ENCODE measurements at regions of chr12 and their contacts with region 1.

Region 1: DNA sequence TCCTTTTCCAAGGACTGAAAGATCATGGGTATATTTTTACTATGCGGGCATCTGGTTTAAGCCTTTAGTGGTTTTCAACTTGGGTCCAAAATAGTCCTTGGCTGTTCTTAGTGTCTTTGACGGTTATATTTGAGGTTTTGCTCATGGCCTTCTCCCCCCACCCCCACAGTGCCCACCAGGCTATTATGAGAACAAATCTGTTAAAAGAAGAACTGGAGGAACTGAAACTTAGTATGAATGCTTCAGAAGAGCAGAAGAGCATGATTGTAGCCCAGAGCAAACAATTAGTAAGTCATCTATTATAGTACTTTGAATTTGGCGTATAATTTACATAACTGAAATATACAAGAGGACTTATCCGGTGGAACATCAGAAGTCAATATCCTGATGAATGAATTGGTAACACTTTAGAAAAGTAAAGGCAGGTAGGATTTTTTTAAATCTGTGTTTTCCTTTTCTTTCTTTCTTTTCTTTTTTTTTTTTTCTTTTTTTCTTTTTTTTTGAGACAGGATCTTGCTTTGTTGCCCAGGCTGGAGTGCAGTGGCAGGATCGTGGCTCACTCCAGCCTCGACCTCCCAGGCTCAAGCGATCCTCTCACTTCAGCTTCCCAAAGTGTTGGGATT is 71.8 kb upstream of the BCAT1 start:
- DNase-seq: no peak
- ATAC-seq: peak; percentile 89
- H3K4me3 Mint-ChIP-seq: peak overlapping the region; percentile 60
- H3K27ac Mint-ChIP-seq: peak overlapping the region; percentile 81
- H3K4me1 Mint-ChIP-seq: peaks cover 68% of the 10 kb centered on the region
- H3K27me3 Mint-ChIP-seq: no peaks in the 10 kb centered on the region
- CTCF ChIP-seq: no peak

Region 2: GRCh38 chr12:24997970-24998582 is 22.7 kb before region 1 on chr12:
- CTCF ChIA-PET with region 1: interaction called, 11 read pairs
- POLR2A ChIA-PET with region 1: interaction called, 70 read pairs
- intact Hi-C with region 1: loop called (anchors 1 kb)
- DNase-seq: no peak
- ATAC-seq: peak; percentile 74
- H3K4me3 Mint-ChIP-seq: peak overlapping the region; percentile 69
- H3K27ac Mint-ChIP-seq: peak overlapping the region; percentile 97
- H3K4me1 Mint-ChIP-seq: peaks cover 90% of the 10 kb centered on the region
- H3K27me3 Mint-ChIP-seq: no peaks in the 10 kb centered on the region
- CTCF ChIP-seq: no peak

Region 3: DNA sequence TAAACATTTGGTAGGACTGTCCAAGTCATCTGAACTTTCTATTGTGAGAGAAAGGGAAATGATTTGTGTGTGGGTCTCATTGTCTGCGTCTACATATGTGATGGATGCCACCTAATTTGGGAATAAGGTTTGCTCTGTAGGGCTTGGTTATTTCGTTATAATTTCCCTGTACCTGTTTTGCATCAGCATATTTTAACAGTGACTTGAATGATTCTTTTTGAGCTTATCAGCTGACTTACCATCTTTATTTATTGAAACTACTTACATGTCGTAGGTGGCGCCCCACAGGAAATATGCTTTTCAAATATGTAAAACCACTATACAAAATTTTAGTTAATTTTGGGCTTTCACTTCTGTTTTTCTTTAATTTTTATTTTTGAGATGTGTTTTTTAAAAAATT is 15.4 kb before region 1 on chr12:
- CTCF ChIA-PET with region 1: interaction called, 3 read pairs
- POLR2A ChIA-PET with region 1: interaction called, 25 read pairs
- intact Hi-C with region 1: loop called (anchors 1 kb)
- DNase-seq: no peak
- ATAC-seq: peak; percentile 65
- H3K4me3 Mint-ChIP-seq: peak overlapping the region; percentile 66
- H3K27ac Mint-ChIP-seq: peak overlapping the region; percentile 86
- H3K4me1 Mint-ChIP-seq: peaks cover 74% of the 10 kb centered on the region
- H3K27me3 Mint-ChIP-seq: no peaks in the 10 kb centered on the region
- CTCF ChIP-seq: no peak

Region 4: DNA sequence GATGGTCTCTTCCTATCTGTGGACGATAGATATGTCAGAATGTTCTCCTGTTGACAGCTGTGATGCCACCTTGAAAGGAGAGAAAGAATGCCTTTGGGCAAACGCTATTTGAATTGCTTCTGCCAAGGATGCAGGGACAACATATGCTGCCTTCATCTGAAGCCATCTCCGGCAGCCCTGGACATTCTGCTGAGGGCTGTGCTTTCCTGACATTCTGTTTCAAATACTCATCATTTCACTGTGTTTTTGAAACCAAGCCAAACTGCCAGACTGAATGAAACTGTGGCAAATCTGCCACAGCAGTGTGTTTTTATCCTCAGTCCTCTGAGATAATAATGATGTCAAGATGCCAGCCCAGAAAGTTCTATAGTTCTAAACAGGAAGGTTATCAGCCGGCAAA is 13.9 kb after region 1 on chr12:
- CTCF ChIA-PET with region 1: no interaction called
- POLR2A ChIA-PET with region 1: interaction called, 3 read pairs
- intact Hi-C with region 1: loop called (anchors 1 kb)
- DNase-seq: no peak
- ATAC-seq: no peak
- H3K4me3 Mint-ChIP-seq: no peak overlapping the region
- H3K27ac Mint-ChIP-seq: no peak overlapping the region
- H3K4me1 Mint-ChIP-seq: peaks cover 9% of the 10 kb centered on the region
- H3K27me3 Mint-ChIP-seq: no peaks in the 10 kb centered on the region
- CTCF ChIP-seq: no peak

Region 5: GRCh38 chr12:25074954-25075353 is 54.2 kb after region 1 on chr12:
- CTCF ChIA-PET with region 1: no interaction called
- POLR2A ChIA-PET with region 1: no interaction called
- intact Hi-C with region 1: loop called (anchors 2 kb)
- DNase-seq: no peak
- ATAC-seq: peak; percentile 40
- H3K4me3 Mint-ChIP-seq: peak overlapping the region; percentile 22
- H3K27ac Mint-ChIP-seq: peak overlapping the region; percentile 61
- H3K4me1 Mint-ChIP-seq: peaks cover 62% of the 10 kb centered on the region
- H3K27me3 Mint-ChIP-seq: no peaks in the 10 kb centered on the region
- CTCF ChIP-seq: no peak